ENCODE measurements at regions of chr18 and their contacts with region 1.

Region 1: GRCh38 chr18:48475635-48476549 is 62.9 kb upstream of the CTIF start:
- DNase-seq: peak; percentile 66 to 70
- ATAC-seq: peak; percentile 90 to 99
- H3K4me3 ChIP-seq: no peak overlapping the region
- H3K27ac ChIP-seq: peak overlapping the region; percentile 58 to 60
- H3K4me1 ChIP-seq: peaks cover 8% of the 10 kb centered on the region
- CTCF ChIP-seq: peak; percentile 78
- EP300 ChIP-seq: no peak
- POLR2A ChIP-seq: no peak
- RAD21 ChIP-seq: peak; percentile 93 to 94

Region 2: DNA sequence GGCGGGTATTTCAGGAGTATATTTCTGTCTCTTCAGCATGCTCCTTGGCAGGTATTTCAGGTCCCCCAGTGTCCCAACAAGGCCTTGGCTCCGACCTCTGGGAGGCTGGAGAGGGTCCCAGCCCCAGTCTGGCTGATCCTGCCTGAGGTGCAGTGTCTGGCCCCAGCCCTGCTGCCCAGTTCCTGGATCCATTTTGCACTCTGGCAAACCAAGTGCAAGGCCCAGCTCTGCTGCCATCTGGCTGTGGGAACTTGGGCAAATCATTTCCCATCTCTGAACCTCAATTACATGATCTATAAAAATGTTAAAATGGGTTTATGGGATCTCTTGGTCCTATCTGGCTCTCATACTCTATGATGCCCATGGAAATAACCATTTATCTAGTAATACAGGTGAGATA is 130.3 kb before region 1 on chr18:
- CTCF ChIA-PET with region 1: no interaction called
- POLR2A ChIA-PET with region 1: no interaction called
- DNase-seq: peak in 1 of 2 experiments; percentile 16
- ATAC-seq: peak; percentile 50 to 68; a peak in 4 of 6 replicates
- H3K4me3 ChIP-seq: no peak overlapping the region
- H3K27ac ChIP-seq: no peak overlapping the region
- H3K4me1 ChIP-seq: no peaks in the 10 kb centered on the region
- CTCF ChIP-seq: peak; percentile 34
- EP300 ChIP-seq: no peak
- POLR2A ChIP-seq: no peak
- RAD21 ChIP-seq: peak; percentile 46 to 49; a peak in 4 of 5 replicates

Region 3: DNA sequence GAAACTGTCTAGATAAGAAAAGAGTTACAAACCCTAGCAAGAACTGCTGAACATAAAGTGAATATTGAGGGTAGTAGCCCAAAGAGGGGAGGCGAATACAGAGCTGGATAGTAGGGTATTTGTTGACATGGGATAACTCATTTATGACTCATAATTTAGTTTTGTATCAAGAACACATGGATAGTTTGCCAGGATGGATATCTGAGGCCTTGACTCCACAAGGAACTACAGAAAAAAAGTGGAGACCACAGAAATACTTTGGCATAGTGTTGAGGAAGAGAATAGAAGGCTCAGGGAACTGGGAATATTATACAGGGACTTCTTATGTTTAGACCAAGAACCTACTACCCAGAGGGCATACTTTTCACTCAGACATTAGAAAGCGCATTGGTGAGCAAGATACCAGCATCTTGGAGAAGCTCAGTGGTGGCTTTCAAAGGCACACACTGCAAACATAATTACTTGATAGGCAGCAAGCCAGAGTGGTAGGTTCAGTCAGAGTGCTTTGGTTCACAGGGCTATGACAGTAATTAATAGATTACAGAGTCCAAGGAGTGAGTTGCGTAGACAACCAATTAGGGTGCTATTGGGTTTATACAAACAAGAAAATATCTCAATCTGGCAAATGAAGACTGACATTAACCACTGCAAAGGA is 14.8 kb before region 1 on chr18:
- CTCF ChIA-PET with region 1: interaction called, 11 read pairs
- POLR2A ChIA-PET with region 1: no interaction called
- DNase-seq: peak in 1 of 2 experiments; percentile 29
- ATAC-seq: no peak; a peak in 1 of 6 replicates
- H3K4me3 ChIP-seq: no peak overlapping the region
- H3K27ac ChIP-seq: no peak overlapping the region
- H3K4me1 ChIP-seq: peaks cover 12% of the 10 kb centered on the region
- CTCF ChIP-seq: no peak
- EP300 ChIP-seq: no peak
- POLR2A ChIP-seq: no peak
- RAD21 ChIP-seq: no peak

Region 4: GRCh38 chr18:48545757-48546321 is 69.9 kb after region 1 on chr18:
- CTCF ChIA-PET with region 1: interaction called, 13 read pairs
- POLR2A ChIA-PET with region 1: no interaction called
- DNase-seq: peak in 1 of 2 experiments; percentile 19
- ATAC-seq: no peak
- H3K4me3 ChIP-seq: no peak overlapping the region
- H3K27ac ChIP-seq: peak overlapping the region in 1 of 2 experiments; percentile 74; a peak in 3 of 6 replicates
- H3K4me1 ChIP-seq: peaks cover 69% of the 10 kb centered on the region
- CTCF ChIP-seq: no peak
- EP300 ChIP-seq: no peak
- POLR2A ChIP-seq: no peak
- RAD21 ChIP-seq: no peak

Region 5: GRCh38 chr18:48627216-48627615 is 151.3 kb after region 1 on chr18:
- CTCF ChIA-PET with region 1: interaction called, 10 read pairs
- POLR2A ChIA-PET with region 1: no interaction called
- DNase-seq: peak in 1 of 2 experiments; percentile 16
- ATAC-seq: no peak
- H3K4me3 ChIP-seq: no peak overlapping the region
- H3K27ac ChIP-seq: peak overlapping the region; percentile 87 to 94
- H3K4me1 ChIP-seq: peaks cover 82% of the 10 kb centered on the region
- CTCF ChIP-seq: no peak
- EP300 ChIP-seq: no peak
- POLR2A ChIP-seq: no peak
- RAD21 ChIP-seq: no peak

Region 6: DNA sequence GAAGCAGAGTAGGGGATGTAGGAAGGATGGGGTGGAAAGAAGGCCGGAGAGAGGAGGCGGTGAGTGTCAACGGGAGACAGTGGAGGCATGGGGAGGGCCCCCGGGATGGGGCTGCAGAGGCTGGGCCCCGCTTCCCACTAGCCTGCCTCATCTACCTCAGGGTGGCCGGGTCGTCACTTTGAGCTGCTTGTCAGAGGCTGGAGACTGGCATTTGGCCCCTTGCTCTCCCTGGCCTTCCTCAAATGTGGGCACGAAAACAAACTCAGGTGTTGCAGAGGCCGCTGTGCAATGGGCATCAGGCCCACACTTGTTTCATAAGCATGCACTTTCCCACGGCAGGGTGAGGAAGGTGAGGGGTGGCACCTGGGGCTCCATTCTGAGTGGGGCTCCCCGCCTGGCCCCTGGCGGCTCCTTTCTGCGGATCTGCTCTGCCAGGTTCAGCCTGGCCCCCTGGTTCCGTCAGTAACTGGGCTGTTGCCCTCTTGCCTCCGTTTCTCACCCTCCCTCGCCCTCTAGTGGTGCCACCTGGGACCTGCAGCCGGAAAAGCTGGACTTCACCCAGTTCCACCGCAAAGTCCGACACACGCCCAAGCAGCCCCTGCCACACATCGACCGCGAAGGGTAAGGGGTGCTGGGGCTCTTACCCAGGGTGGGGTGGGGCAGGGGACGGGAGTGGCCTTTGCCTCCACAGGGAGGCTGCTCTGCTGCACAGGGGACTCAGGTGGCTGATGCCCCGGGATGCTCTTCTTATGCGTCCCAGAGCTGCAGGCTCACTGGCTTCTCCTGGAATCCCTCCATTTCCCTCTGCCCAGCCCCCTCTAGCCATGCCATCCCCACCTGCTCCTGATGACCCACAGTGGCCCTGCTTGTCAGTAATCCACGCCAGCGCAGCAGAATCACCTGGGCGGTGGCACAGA is 188.3 kb after region 1 on chr18:
- CTCF ChIA-PET with region 1: interaction called, 49 read pairs
- POLR2A ChIA-PET with region 1: no interaction called
- DNase-seq: peak; percentile 39 to 60
- ATAC-seq: peak; percentile 32 to 69; a peak in 4 of 6 replicates
- H3K4me3 ChIP-seq: no peak overlapping the region
- H3K27ac ChIP-seq: peak overlapping the region; percentile 17 to 80; a peak in 3 of 6 replicates
- H3K4me1 ChIP-seq: peaks cover 43% of the 10 kb centered on the region
- CTCF ChIP-seq: peak; percentile 59
- EP300 ChIP-seq: no peak
- POLR2A ChIP-seq: no peak
- RAD21 ChIP-seq: peak; percentile 74 to 76

Measured in A549 (cell line).